Activated T-helper 1 cell treated with anti-CD3 and anti-CD28 coated beads, Interleukin-12 subunit alpha, Interleukin-12 subunit beta, Interleukin-2, Interleukin-4 antibody, amounts not matched to agents 30 ng/mL and 10 ng/mL and 1 ng/mL, durations not matched to agents 14 hours and 24 hours and 36 hours (primary cell): ENCODE measurements at regions of chr17 and their contacts with region 1.

Region 1: DNA sequence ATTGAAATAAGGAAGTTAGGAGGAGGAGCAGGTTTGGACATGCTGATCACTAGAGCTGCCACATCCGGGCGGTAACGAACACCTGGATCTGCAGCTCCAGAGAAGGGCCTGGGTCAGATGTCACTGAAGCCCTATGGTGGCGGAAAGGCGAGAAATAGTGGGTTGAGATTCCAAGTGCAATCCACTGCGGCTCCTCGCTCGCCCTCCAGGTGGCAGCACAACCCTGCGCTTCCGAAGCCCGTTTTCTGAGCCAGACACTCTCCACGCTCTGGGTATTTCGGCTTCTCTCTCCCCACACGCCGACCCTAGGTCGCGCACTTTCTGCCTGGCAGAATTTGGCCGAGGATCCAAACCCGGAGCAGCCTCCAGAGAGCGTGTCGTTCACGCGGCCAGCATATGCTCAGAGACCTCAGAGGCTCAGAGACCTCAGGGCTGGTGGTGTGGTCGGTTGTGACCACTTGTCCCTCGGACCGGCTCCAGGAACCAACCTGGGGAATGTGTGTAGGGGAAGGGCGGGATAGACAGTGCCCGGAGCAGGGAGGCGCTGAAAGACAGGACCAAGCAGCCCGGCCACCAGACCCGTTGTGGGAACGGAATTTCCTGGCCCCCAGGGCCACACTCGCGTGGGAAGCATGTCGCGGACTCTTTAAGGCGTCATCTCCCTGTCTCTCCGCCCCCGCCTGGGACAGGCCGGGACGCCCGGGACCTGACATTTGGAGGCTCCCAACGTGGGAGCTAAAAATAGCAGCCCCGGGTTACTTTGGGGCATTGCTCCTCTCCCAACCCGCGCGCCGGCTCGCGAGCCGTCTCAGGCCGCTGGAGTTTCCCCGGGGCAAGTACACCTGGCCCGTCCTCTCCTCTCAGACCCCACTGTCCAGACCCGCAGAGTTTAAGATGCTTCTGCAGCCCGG is 744 bp upstream of the SLC2A4 start:
- DNase-seq: peak; percentile 69
- H3K4me3 Mint-ChIP-seq: peak overlapping the region; percentile 79
- H3K27ac Mint-ChIP-seq: peak overlapping the region; percentile 40
- H3K4me1 Mint-ChIP-seq: peaks cover 16% of the 10 kb centered on the region
- H3K27me3 Mint-ChIP-seq: peaks cover 33% of the 10 kb centered on the region

Region 2: GRCh38 chr17:7214300-7215135 is 66.3 kb before region 1 on chr17:
- intact Hi-C with region 1: loop called (anchors 2 kb)
- DNase-seq: peak; percentile 99
- H3K4me3 Mint-ChIP-seq: peak overlapping the region; percentile 91
- H3K27ac Mint-ChIP-seq: peak overlapping the region; percentile 98
- H3K4me1 Mint-ChIP-seq: peaks cover 55% of the 10 kb centered on the region
- H3K27me3 Mint-ChIP-seq: peaks cover 14% of the 10 kb centered on the region

Region 3: DNA sequence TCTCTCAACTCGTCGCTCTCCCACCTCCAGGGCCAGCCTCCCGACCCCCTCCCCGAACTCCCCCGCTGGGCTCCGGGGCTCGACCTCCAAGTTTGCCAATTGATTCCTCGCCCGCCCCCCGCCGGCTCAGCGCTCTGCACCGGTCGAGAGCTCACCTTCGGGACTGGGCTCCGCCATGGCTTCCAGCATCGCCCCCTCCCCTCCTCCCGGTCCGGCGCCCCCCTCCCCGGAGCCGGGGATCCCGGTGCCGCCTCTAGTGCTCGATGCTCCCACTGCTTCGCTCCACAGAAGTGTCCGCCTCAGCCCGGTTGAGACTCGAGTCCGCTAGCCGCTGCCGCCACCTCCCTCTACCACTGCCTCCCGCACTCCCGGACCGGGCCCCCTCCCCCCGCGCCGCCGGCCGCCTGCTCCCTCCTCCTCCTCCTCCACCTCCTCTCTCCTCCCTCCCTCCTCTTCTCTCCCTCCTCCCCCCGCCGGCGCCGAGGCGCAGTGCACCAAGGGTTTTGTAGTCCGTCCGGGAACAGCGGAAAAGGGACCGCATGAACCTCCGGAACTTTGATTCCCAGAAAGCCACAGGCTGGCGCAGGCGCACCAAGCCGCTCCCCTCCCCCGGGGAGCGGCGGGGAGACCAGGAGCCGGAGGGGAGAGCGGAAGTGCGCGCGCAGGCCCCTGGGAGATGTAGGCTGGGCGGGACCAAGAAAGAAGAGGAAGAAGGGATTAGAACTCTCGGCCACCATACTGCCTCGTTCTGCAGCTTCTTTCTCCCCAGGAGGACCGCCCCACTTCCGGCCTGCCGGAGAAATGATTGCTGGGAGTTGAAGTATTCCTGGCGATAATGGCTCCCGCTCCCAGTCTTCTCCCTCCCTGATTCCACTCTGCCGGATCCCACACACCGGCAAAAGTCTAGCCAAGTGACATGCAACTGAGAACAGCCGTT is 41.4 kb before region 1 on chr17 and contains the start of gene PHF23:
- intact Hi-C with region 1: loop called (anchors 1 kb)
- DNase-seq: peak; percentile 98
- H3K4me3 Mint-ChIP-seq: peak within 1 kb of the TSS; percentile 97
- H3K27ac Mint-ChIP-seq: peak within 1 kb of the TSS; percentile 94
- H3K4me1 Mint-ChIP-seq: peaks cover 68% of the 10 kb centered on the region
- H3K27me3 Mint-ChIP-seq: no peaks in the 10 kb centered on the region
- total RNA-seq, gene PHF23: 52.5 and 55.4 TPM in 2 replicates

Region 4: DNA sequence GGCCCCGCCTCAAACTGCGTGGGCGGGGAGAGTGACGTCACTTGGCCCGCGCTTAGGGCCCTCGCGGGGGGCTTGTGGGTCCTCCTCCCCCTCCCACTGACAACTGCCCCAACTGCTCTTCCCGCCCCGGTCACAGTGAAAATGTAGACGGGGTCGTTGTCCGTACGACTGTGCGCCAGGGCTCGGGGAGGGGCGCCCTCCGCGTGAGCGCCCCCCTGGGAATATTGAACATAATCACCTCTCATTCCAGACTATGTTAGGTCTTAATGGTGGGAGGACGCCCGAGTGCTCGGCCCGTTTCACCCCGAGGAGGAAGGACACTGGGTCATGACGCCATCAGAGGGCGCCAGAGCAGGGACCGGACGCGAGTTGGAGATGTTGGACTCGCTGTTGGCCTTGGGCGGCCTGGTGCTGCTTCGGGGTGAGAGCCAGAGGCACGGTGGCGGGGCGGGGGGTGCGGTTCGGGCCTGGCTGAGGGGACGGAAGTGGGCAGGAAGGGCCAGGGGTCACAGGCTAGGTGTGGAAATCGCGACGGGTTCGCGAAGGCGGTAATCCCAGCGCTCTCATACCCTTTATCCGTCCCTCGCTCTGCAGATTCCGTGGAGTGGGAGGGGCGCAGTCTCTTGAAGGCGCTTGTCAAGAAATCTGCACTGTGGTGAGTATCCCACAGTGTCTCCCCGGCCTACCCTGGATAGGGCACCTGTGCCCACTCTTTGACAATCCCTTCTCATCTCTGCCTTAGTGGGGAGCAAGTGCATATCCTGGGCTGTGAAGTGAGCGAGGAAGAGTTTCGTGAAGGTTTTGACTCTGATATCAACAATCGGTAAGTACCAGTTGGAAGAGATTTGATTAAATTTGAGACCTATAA is 28.4 kb before region 1 on chr17 and contains the start of gene ELP5:
- intact Hi-C with region 1: no loop called
- DNase-seq: peak; percentile 86
- H3K4me3 Mint-ChIP-seq: peak within 1 kb of the TSS; percentile 98
- H3K27ac Mint-ChIP-seq: peak within 1 kb of the TSS; percentile 99
- H3K4me1 Mint-ChIP-seq: peaks cover 42% of the 10 kb centered on the region
- H3K27me3 Mint-ChIP-seq: peaks cover 5% of the 10 kb centered on the region
- total RNA-seq, gene ELP5: 73.6 and 75.5 TPM in 2 replicates

Region 5: GRCh38 chr17:7263083-7264078 is 17.4 kb before region 1 on chr17:
- intact Hi-C with region 1: loop called (anchors 2 kb)
- DNase-seq: no peak
- H3K4me3 Mint-ChIP-seq: peak overlapping the region; percentile 73
- H3K27ac Mint-ChIP-seq: peak overlapping the region; percentile 49
- H3K4me1 Mint-ChIP-seq: peaks cover 32% of the 10 kb centered on the region
- H3K27me3 Mint-ChIP-seq: peaks cover 23% of the 10 kb centered on the region

Region 6: GRCh38 chr17:7296189-7296902 is 15.6 kb after region 1 on chr17:
- intact Hi-C with region 1: loop called (anchors 1 kb)
- DNase-seq: peak; percentile 63
- H3K4me3 Mint-ChIP-seq: peak overlapping the region; percentile 22
- H3K27ac Mint-ChIP-seq: no peak overlapping the region
- H3K4me1 Mint-ChIP-seq: peaks cover 16% of the 10 kb centered on the region
- H3K27me3 Mint-ChIP-seq: peaks cover 34% of the 10 kb centered on the region

Region 7: DNA sequence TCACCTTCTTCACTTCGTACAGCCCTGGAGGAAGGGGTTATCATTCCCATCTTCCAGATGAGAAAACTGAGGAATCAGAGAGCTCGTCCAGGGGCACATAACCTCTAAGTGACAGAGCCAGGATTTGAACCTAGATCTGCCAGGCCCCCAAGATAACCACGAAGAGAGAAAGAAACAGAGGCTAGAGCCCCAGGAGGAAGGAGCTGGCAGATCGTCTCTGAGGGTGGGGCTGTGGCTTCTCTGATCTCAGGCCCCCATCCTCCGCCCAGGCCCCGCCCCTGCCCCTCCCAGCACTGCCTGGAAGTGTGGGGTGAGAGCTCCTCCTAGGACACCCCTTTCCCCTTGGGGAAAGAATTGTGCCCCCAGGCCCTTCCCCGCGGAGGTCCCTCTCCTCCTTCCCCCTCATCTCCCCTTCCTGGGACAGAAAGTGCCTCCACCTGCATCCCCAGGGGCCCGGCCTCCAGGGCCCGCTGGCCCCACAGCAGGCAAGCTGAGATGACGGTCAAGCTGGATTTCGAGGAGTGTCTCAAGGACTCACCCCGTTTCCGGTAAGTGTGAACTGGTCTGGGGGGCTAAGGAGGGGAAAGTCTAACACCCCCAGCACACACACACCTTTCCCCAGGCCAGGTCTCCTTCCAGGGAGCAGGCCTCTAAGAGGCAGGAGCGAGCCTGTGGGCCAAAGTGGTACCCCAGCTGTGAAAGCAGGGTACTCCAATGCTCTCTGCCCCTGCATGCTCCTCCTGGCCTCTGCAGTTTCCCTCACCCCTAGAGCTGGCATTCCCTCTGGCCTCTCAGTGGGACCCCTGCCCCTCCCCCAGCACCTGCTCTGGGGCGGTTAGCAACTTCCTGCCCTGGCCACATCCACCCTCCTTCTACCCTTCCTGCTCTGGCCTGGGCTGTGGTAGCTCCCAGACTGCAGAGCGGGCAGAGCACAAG is 55.7 kb after region 1 on chr17 and contains the start of gene ACAP1:
- intact Hi-C with region 1: loop called (anchors 2 kb)
- DNase-seq: peak; percentile 76
- H3K4me3 Mint-ChIP-seq: peak within 1 kb of the TSS; percentile 91
- H3K27ac Mint-ChIP-seq: peak within 1 kb of the TSS; percentile 93
- H3K4me1 Mint-ChIP-seq: peaks cover 51% of the 10 kb centered on the region
- H3K27me3 Mint-ChIP-seq: no peaks in the 10 kb centered on the region
- total RNA-seq, gene ACAP1: 260 and 266 TPM in 2 replicates

Region 8: DNA sequence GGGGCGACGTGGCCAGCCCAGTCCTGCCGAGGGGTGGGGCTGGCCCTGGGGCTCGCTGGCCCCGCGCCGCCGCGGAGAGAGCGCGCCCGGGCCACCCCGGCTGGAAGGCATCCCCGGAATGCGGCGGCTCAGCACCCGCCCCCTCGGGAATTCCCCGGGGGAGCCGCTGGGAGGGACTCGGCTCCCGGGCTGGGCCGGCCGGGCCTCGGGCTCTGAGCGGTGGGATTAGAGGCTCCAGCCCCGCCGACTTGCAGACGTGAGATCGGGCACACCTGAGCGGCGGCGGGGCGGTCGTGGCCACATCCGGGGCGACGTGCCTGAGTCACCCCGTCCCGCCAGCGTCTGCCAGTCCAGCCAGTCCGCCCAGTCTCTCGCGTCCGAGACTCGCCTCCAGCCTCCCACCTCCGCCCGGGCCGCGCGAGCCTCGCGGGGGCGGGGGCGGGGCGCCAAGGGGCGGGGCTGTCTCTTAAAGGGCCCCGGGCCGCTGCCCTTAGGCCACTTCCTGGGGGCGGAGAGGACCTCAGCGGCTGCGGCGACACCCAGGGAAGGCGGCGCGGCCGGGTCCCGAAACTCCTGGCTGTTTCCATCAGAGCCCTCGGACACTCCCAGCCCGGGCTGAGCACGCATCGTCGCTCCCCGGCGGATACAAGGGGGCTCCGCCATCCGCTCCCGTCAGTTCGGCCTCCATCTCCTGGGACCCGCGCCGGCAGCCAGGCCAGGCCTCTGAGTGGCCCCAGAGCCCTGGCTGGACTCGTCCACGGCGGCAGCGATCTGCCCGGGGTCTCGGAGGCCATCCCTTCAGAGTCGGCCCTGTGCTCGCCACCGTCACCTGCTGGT is 71.1 kb after region 1 on chr17 and contains the start of gene KCTD11:
- intact Hi-C with region 1: loop called (anchors 2 kb)
- DNase-seq: peak; percentile 76
- H3K4me3 Mint-ChIP-seq: peak within 1 kb of the TSS; percentile 84
- H3K27ac Mint-ChIP-seq: peak within 1 kb of the TSS; percentile 87
- H3K4me1 Mint-ChIP-seq: peaks cover 41% of the 10 kb centered on the region
- H3K27me3 Mint-ChIP-seq: no peaks in the 10 kb centered on the region
- total RNA-seq, gene KCTD11: 5.3 TPM in 2 replicates

Region 9: GRCh38 chr17:8766731-8767130 is 1486.0 kb after region 1 on chr17:
- intact Hi-C with region 1: no loop called
- DNase-seq: no peak
- H3K4me3 Mint-ChIP-seq: no peak overlapping the region
- H3K27ac Mint-ChIP-seq: no peak overlapping the region
- H3K4me1 Mint-ChIP-seq: no peaks in the 10 kb centered on the region
- H3K27me3 Mint-ChIP-seq: peaks cover 24% of the 10 kb centered on the region